ENCODE measurements at regions of chr17 and their contacts with region 1.

Region 1: DNA sequence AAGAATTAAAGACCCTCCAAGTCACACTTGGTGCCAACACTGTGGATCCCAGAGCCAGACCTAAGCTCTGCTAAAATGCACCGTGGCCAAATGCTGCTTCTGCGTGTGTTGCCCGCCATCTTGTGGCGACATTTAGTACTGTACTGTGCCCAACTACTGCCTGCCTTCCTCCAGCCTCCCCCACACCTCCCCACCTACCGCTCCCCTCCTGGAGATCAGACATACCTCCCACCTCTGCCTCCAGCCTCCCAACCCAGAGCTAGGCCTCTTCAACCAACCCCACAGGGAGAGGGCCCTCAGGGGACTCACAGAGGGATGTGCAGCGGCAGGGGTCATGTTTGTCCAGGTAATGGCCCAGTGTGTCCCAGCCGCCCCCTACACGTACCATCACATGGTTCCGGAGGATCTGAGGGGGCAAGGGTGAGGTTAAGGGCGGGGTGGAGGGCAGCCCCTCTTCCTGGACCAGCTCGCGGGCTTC is 5.5 kb downstream of the GAS2L2 start:
- H3K4me3 ChIP-seq: no peak overlapping the region
- H3K27ac ChIP-seq: no peak overlapping the region
- H3K4me1 ChIP-seq: no peaks in the 10 kb centered on the region
- CTCF ChIP-seq: peak; percentile 97

Region 2: GRCh38 chr17:35587074-35587971 is 160.3 kb before region 1 on chr17 and contains the start of gene AP2B1:
- CTCF ChIA-PET with region 1: interaction called, 13 read pairs
- POLR2A ChIA-PET with region 1: no interaction called
- H3K4me3 ChIP-seq: peak within 1 kb of the TSS; percentile 56
- H3K27ac ChIP-seq: peak within 1 kb of the TSS; percentile 88
- H3K4me1 ChIP-seq: peaks cover 15% of the 10 kb centered on the region; the same call in 1 of the 2 replicates
- CTCF ChIP-seq: peak; percentile 42; the same call in 1 of the 2 replicates

Region 3: GRCh38 chr17:35660902-35661301 is 86.7 kb before region 1 on chr17:
- CTCF ChIA-PET with region 1: interaction called, 22 read pairs
- POLR2A ChIA-PET with region 1: no interaction called
- H3K4me3 ChIP-seq: no peak overlapping the region
- H3K27ac ChIP-seq: no peak overlapping the region
- H3K4me1 ChIP-seq: no peaks in the 10 kb centered on the region
- CTCF ChIP-seq: no peak

Region 4: DNA sequence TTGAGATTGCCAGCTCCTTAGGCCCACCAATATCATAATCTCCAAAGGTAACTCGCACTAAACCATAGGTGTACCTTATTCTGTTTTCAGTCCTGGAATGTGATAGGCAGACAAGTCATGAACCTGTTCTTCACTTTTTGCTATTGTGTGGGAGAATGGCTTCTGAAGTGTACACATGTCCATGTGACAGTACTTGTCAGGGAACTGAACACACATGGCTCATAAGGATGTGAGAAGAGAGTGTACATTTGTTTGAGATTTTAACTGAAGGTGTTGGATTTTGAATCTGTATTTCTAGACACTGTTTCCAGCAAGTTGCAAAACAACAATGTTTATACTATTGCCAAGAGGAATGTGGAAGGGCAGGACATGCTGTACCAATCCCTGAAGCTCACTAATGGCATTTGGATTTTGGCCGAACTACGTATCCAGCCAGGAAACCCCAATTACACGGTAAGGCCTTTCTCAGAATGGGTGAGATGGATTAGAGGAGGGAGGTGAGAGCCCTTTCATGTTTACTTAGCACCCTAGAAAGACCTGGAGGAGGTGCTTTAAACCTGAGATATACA is 30.6 kb before region 1 on chr17:
- CTCF ChIA-PET with region 1: interaction called, 11 read pairs
- POLR2A ChIA-PET with region 1: no interaction called
- H3K4me3 ChIP-seq: no peak overlapping the region
- H3K27ac ChIP-seq: no peak overlapping the region
- H3K4me1 ChIP-seq: peaks cover 10% of the 10 kb centered on the region
- CTCF ChIP-seq: no peak

Region 5: DNA sequence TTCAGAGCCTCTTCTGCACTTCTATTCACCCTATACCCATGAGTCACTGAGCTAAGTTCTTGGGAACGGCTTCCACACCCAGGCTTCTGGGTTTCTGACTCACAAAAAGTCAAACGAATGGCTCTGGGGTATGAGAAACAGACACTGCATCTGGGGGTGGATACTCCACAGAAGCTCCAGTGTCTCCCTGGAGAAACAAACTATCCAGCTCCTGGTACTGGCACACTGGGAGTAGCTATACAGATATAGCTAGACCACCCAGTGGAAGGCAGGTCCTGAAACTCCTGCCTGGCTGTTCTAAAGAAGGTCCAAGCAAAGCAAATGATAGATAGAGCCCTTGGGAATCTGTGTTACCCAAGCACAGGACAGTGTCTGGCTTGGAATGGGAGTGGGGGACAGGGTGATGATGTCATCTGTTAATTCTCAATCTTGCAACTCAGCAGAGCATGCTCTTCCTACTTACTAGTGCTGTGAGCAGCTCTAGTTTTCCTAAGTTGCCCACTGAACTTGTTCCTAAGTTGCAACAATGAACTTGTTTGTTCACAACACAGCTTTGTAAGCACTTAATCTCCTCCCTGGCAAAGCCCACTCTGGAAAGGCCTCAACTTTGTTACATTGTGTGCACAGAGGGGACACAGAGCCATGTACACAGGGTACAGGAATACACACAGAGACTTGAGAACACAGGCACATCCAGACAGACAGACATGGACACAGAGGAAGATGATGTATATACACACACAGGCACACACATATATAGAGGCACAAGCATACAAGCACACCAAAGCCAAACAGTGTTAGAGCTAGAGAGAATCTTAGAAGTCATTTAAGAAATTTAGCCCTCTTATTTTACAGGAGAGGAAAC is 41.2 kb after region 1 on chr17:
- CTCF ChIA-PET with region 1: interaction called, 10 read pairs
- POLR2A ChIA-PET with region 1: no interaction called
- H3K4me3 ChIP-seq: no peak overlapping the region
- H3K27ac ChIP-seq: no peak overlapping the region
- H3K4me1 ChIP-seq: no peaks in the 10 kb centered on the region
- CTCF ChIP-seq: no peak

Measured in HEK293 (cell line).